AG04450 (cell line): ENCODE measurements at regions of chr17 and their contacts with region 1.

Region 1: GRCh38 chr17:44044067-44044466 is 22.4 kb downstream of the LSM12 start:
- DNase-seq: no peak
- H3K4me3 ChIP-seq: no peak overlapping the region
- H3K27ac ChIP-seq: peak overlapping the region; percentile 80
- H3K27me3 ChIP-seq: no peaks in the 10 kb centered on the region
- CTCF ChIP-seq: no peak

Region 2: DNA sequence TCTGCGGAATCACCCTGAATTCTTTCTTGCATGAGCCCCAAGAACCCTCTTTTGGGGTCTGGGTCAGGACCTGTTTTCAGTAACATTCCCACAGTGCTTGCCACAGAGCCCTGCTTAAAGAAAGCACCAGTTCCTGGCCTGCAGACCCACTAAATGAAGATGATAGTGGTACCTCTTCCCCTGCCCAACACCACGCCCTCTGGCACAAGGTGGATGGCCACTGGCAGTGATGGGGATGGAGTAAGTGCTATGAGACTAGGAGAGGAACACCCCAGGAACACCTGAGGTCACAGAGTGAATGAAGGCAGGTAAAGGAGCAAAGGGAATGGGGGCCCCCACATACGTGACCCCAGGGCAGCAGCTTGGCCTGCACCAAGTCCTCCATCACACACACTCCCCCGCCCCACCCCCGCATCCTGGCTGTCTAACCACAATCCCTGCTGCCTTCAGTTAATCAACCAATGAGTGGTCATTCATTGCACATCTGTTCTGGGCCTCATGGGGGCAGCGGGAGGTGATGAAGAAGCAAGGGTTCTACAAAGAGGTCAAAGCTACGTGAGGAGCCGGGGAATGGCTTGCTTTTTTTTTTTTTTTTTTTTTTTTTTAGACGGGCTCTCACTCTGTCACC is 97.9 kb before region 1 on chr17:
- CTCF ChIA-PET with region 1: interaction called, 55 read pairs
- POLR2A ChIA-PET with region 1: no interaction called
- DNase-seq: no peak
- H3K4me3 ChIP-seq: no peak overlapping the region
- H3K27ac ChIP-seq: no peak overlapping the region
- H3K27me3 ChIP-seq: peaks cover 20% of the 10 kb centered on the region
- CTCF ChIP-seq: no peak

Region 3: DNA sequence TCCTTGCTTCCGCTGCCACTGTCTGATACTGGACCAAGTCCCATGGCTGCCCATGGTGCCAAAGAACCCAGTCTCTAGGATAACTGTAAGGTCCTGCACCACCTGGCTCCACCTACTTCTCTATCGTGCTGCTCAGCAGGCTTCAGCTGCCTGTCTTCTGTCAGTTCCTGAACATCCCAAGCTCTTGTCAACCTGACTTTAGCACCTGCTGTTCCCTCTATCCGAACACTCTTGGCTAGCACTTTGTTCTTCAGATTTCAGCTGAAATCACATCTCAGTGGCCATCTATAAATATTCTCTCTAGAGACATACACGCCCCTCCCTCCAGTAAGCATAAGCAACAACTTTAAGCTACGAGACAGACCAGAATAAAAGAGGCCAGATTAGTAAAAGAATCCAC is 14.3 kb before region 1 on chr17:
- CTCF ChIA-PET with region 1: interaction called, 24 read pairs
- POLR2A ChIA-PET with region 1: interaction called, 3 read pairs
- DNase-seq: no peak
- H3K4me3 ChIP-seq: no peak overlapping the region
- H3K27ac ChIP-seq: no peak overlapping the region
- H3K27me3 ChIP-seq: no peaks in the 10 kb centered on the region
- CTCF ChIP-seq: no peak

Region 4: GRCh38 chr17:44061446-44061845 is 17.4 kb after region 1 on chr17:
- CTCF ChIA-PET with region 1: interaction called, 10 read pairs
- POLR2A ChIA-PET with region 1: interaction called, 8 read pairs
- DNase-seq: no peak
- H3K4me3 ChIP-seq: no peak overlapping the region
- H3K27ac ChIP-seq: no peak overlapping the region
- H3K27me3 ChIP-seq: no peaks in the 10 kb centered on the region
- CTCF ChIP-seq: no peak

Region 5: GRCh38 chr17:44110823-44111633 is 67.0 kb after region 1 on chr17:
- CTCF ChIA-PET with region 1: interaction called, 29 read pairs
- POLR2A ChIA-PET with region 1: interaction called, 3 read pairs
- DNase-seq: no peak
- H3K4me3 ChIP-seq: peak overlapping the region; percentile 57
- H3K27ac ChIP-seq: peak overlapping the region; percentile 47
- H3K27me3 ChIP-seq: no peaks in the 10 kb centered on the region
- CTCF ChIP-seq: no peak; the same call in 1 of the 2 replicates

Region 6: GRCh38 chr17:44297975-44298374 is 253.9 kb after region 1 on chr17:
- CTCF ChIA-PET with region 1: no interaction called
- POLR2A ChIA-PET with region 1: no interaction called
- DNase-seq: no peak
- H3K4me3 ChIP-seq: no peak overlapping the region
- H3K27ac ChIP-seq: no peak overlapping the region
- H3K27me3 ChIP-seq: peaks cover 27% of the 10 kb centered on the region
- CTCF ChIP-seq: no peak